Prostate gland (tissue), 2 donors: ENCODE measurements at regions of chr18 and their contacts with region 1.

Region 1: DNA sequence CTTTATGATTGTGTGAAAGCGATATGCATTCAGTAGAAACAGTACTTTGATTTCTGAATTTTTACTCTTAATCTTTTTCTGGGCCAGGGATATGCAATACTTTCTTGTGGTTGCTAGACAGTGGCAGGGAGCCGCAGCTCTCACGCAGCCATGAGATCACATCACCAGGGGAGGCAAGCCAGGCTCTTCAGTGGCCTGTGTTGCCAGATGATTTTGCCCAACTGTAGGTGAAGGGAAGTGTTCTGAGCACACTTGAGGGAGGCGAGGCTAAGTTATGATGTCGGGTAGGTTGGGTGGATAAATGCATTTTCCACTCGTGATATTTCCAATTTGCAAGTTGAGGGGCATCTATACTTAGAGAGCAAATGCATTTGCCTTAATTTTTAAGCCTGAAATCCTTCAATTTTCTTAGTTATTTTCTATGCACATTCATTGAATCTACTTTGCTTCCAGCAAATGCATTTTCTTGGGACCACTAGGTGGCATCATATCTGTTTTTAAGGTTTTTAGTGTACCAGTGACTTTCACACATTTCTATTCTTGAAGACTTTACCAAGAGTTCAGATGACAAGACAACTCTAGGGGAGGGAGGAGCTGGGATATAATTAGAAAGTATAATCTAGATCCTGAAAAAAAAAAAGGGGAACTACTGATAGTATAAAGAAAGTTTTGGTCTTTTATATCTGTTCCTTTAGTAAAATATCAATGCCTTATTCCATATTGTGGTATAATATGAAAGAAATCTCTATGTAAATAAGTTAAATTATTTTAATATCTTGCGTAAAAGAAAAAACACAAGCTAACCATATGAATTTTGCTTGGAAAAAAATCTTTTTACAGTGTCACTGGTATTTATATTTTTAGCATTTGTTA is 643.3 kb downstream of the SOCS6 start:
- DNase-seq: no peak
- H3K4me3 ChIP-seq: no peak overlapping the region
- H3K27ac ChIP-seq: no peak overlapping the region
- H3K4me1 ChIP-seq: no peaks in the 10 kb centered on the region
- H3K27me3 ChIP-seq: no peaks in the 10 kb centered on the region
- CTCF ChIP-seq: peak in 3 of 4 experiments; percentile 40 to 42 (median 40)
- POLR2A ChIP-seq: no peak

Region 2: GRCh38 chr18:70981400-70982140 is 49.4 kb after region 1 on chr18:
- intact Hi-C with region 1: no loop called
- DNase-seq: no peak
- H3K4me3 ChIP-seq: no peak overlapping the region
- H3K27ac ChIP-seq: no peak overlapping the region
- H3K4me1 ChIP-seq: no peaks in the 10 kb centered on the region
- H3K27me3 ChIP-seq: no peaks in the 10 kb centered on the region
- CTCF ChIP-seq: no peak
- POLR2A ChIP-seq: no peak

Region 3: GRCh38 chr18:72544092-72544886 is 1612.1 kb after region 1 on chr18 and contains the start of gene CBLN2:
- intact Hi-C with region 1: loop called (anchors 5 kb)
- DNase-seq: peak; percentile 56
- H3K4me3 ChIP-seq: peak within 1 kb of the TSS; percentile 0 to 19
- H3K27ac ChIP-seq: no peak within 1 kb of the TSS
- H3K4me1 ChIP-seq: no peaks in the 10 kb centered on the region
- H3K27me3 ChIP-seq: peaks cover 5% of the 10 kb centered on the region
- CTCF ChIP-seq: peak; percentile 49 to 73 (median 64)
- POLR2A ChIP-seq: no peak
- total RNA-seq, gene CBLN2: 1.7 to 6.3 TPM